Sigmoid colon (tissue), 7 donors: ENCODE measurements at regions of chr5 and their contacts with region 1.

Region 1: GRCh38 chr5:78353520-78353919 is 6.9 kb upstream of the SCAMP1 start:
- DNase-seq: no peak
- H3K4me3 ChIP-seq: no peak overlapping the region
- H3K27ac ChIP-seq: no peak overlapping the region
- H3K4me1 ChIP-seq: peaks cover 0 to 2% (median 1%) of the 10 kb centered on the region in 4 donors
- H3K27me3 ChIP-seq: no peaks in the 10 kb centered on the region
- CTCF ChIP-seq: no peak
- EP300 ChIP-seq: no peak
- POLR2A ChIP-seq: no peak

Region 2: GRCh38 chr5:78253201-78253600 is 100.3 kb before region 1 on chr5:
- intact Hi-C with region 1: no loop called
- DNase-seq: no peak
- H3K4me3 ChIP-seq: no peak overlapping the region
- H3K27ac ChIP-seq: no peak overlapping the region
- H3K4me1 ChIP-seq: no peaks in the 10 kb centered on the region
- H3K27me3 ChIP-seq: no peaks in the 10 kb centered on the region
- CTCF ChIP-seq: no peak
- EP300 ChIP-seq: no peak
- POLR2A ChIP-seq: no peak

Region 3: DNA sequence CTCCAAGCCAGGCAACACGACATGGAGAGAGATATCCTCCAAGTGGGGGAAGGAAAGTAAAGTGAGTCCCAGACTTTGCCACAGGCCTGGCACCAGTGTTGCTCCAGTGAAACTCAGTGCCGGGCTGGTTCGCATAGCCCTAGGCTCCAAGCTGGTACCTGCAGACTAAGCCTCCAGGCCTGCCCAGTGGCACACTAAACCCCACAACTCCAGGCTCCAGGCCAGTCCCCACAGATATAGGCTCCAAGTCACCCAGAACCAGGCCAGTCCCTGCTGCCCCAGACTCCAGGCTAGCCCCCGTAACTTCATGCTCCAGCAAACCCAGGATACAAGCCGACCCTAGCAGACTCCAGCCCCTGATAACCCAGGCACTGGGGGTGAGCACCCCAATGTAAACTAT is 36.0 kb before region 1 on chr5:
- intact Hi-C with region 1: loop called (anchors 5 kb)
- DNase-seq: no peak
- H3K4me3 ChIP-seq: no peak overlapping the region
- H3K27ac ChIP-seq: no peak overlapping the region
- H3K4me1 ChIP-seq: no peaks in the 10 kb centered on the region
- H3K27me3 ChIP-seq: no peaks in the 10 kb centered on the region
- CTCF ChIP-seq: no peak
- EP300 ChIP-seq: no peak
- POLR2A ChIP-seq: no peak